CD4-positive, alpha-beta T cell (primary cell): ENCODE measurements at regions of chr6 and their contacts with region 1.

Region 1: DNA sequence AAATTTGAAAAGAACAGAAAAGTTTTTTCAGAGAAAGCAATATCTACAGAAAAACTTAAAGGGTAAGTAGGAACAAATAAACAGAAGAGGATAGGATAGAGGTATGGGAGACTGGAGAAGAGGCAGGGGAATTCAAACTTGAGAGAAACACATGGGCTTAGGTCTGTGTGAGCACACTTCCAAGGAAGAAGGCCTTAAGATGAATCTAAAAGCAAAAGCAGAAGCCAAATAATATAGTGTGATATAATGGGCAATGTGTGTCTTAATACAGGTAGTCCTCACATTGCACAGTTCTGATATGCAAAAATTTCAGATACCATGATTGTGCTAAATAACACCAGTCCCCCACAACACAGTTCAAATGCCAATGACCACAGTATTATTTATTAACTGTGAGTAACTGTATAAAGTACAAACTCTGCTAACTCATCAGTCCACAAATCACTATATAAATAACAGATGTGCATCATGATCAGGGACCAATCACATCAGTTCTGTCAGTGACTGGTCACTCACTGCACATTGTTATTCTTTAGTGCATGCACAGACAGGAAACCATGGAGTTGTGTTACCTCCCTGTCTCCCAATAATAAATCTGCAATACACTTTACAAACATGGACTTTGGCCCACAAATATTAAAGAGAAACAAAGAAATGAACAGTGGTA is 18.6 kb downstream of the SNX14 start:
- DNase-seq: no peak
- ATAC-seq: no peak
- H3K4me3 ChIP-seq: no peak overlapping the region
- H3K4me3 Mint-ChIP-seq: no peak overlapping the region
- H3K27ac ChIP-seq: no peak overlapping the region
- H3K27ac Mint-ChIP-seq: no peak overlapping the region
- H3K4me1 ChIP-seq: peaks cover 3% of the 10 kb centered on the region
- H3K4me1 Mint-ChIP-seq: peaks cover 16% of the 10 kb centered on the region
- H3K27me3 ChIP-seq: no peaks in the 10 kb centered on the region
- H3K27me3 Mint-ChIP-seq: no peaks in the 10 kb centered on the region
- CTCF ChIP-seq: no peak

Region 2: DNA sequence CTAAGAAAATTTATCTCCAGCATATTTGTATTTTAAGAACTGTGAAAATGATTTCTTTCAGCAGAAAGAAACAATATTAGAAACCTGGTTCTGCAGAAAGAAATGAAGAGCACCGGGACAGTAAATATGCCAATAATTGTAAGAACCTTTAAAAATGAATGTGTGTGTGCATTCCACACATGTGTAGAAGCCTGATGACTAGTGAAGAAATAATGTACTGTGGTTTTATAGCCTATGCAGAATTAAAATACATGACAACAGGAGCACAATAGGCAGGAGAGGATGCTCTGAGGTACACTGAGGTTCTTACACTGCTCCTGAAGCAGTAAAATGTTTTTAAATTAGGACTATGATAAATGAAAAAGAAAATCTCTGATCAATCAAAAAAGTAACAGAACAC is 30.3 kb before region 1 on chr6:
- CTCF ChIA-PET with region 1: no interaction called
- POLR2A ChIA-PET with region 1: no interaction called
- intact Hi-C with region 1: loop called in 1 of 2 experiments (anchors 5 kb)
- DNase-seq: no peak
- ATAC-seq: no peak
- H3K4me3 ChIP-seq: no peak overlapping the region
- H3K4me3 Mint-ChIP-seq: no peak overlapping the region
- H3K27ac ChIP-seq: no peak overlapping the region
- H3K27ac Mint-ChIP-seq: no peak overlapping the region
- H3K4me1 ChIP-seq: no peaks in the 10 kb centered on the region
- H3K4me1 Mint-ChIP-seq: no peaks in the 10 kb centered on the region
- H3K27me3 ChIP-seq: no peaks in the 10 kb centered on the region
- H3K27me3 Mint-ChIP-seq: no peaks in the 10 kb centered on the region
- CTCF ChIP-seq: no peak